Lower leg skin (tissue), 4 donors: ENCODE measurements at regions of chr2 and their contacts with region 1.

Region 1: DNA sequence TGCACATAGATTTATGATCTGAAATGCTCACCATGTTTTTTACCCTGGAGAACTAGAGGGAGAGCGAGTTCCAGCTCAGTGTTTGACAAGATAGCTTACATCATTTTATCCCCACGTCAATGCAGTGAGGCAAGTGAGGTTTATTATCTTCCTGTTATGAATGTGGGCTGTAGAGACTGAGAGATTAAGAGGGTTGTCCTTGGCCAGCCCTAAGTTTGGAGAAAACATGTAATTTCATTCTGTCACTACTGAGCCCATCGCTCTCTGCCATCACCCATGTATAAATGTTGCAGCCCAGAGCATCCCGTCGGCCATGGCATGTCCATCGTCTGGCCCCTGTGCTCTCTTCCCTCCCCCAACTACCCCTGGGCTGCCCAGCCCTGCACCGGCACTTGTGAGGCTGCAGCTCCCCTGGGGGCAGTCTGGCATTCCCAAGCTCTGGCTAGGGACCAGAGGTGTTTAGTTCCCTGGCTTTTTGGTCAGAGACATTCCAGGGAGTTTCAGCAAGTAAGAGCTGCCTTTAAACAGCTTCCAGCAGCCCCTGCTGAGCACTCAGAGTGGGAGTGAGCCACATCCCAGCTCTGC is 136.7 kb downstream of the ANTXR1 start:
- DNase-seq: peak in 1 of 2 donors; percentile 87
- H3K4me3 ChIP-seq: no peak overlapping the region
- CTCF ChIP-seq: no peak
- POLR2A ChIP-seq: no peak

Region 2: DNA sequence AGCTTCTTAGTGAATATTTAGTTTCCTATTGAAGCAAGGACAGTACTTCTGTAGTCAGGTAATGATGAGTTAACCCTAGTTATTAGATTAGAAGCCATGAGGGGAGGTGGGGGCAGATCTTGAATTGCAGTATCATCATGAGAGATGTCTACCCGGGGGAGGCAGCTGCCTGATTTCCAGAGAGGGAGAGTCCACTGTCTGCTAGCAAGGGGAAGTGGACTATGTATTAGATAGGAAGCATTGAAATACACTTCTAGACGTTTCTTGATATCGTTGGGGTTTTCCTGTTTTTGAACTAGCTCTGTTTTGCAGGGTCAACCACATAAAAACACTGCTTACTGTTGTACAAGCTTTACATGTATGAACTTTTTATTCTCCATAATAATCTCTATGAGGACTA is 643.6 kb before region 1 on chr2:
- intact Hi-C with region 1: no loop called
- DNase-seq: no peak
- H3K4me3 ChIP-seq: no peak overlapping the region
- CTCF ChIP-seq: no peak
- POLR2A ChIP-seq: no peak

Region 3: DNA sequence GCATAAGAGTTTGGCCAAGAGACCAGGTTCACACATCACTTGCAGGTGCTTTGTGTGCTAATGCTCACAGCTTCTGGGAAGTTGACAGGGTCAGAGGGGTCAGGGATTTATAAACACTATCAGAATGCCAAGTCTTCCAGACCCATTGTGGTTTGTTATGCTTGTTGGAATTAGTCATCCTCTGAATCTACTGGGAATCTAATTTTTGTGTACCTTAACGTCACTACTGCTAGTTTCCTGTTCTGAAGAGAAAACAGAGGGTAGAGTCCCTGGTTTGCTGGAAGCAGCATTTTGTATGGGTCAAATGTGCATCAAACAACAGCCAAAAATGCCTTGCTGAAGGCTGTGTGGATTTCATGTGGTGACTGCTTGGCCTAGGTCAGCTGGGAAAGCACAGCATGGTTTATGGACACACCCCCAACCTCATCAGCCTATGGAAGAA is 103.5 kb before region 1 on chr2:
- intact Hi-C with region 1: loop called (anchors 10 kb)
- DNase-seq: no peak
- H3K4me3 ChIP-seq: no peak overlapping the region
- CTCF ChIP-seq: no peak
- POLR2A ChIP-seq: no peak